Activated CD4-positive, alpha-beta memory T cell treated with anti-CD3 and anti-CD28 coated beads for 36 hours (primary cell): ENCODE measurements at regions of chr2 and their contacts with region 1.

Region 1: DNA sequence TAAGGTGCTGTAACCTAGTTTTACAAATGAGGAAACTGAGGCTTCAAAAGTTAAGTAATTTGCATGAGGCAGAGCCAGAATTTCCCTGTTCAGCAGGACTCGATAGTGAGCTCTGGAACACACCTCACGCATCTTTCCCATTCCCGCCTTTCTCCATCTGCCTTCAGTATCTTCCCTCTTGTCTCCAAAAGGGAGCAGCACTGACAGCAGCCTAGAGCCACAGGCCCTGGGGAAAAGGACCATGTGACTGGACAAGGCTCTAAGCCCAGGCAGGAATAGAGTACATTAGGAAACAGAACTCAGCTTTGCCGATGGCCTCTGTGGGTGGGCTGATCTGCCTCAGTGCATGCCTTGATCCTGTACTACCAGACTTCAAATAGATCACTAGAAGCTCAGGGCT is 21.5 kb downstream of the GPR155 start:
- DNase-seq: no peak
- H3K4me3 Mint-ChIP-seq: no peak overlapping the region
- H3K27ac Mint-ChIP-seq: no peak overlapping the region
- H3K4me1 Mint-ChIP-seq: no peaks in the 10 kb centered on the region
- H3K27me3 Mint-ChIP-seq: no peaks in the 10 kb centered on the region

Region 2: DNA sequence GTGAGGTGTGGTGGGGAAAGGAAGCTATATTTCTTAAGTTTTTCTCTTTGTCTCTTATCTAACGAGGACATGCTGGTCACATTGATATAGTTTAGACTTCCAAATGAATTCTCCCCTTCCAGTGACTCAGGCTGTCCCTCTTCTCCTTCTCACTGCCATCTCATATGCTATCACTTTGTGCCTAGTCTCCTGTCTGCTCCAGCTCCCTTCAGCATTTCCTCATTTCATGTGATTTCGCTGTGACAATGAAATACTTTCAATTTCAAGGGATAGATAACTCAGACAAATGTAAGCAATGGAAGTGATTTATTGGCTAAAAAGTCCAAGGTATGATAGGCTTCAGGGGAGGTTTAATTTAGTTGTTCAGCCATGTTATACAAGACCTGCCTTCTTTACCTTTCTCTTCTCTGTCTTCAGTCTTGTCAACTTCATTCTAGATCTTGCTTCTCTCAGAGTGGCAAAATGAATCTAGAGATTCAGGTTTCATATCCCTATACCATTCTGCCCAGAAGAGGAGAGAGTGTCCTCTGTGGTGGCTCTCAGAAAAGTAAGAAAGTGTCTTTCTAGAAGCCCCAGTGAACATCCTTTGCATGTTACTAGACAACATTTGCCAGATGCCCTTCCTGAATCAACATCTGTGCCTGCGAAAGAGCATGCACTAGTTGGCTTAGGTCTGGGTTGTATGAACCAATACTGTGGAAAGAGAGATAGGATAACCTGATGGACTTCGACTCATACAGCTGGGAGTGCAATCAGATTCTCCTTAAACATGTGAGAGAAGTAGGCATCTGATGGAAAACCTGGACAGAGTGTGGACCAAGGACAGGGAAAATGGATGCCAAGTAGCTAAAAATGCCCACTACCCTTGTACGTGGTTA is 51.4 kb after region 1 on chr2:
- CTCF ChIA-PET with region 1: interaction called, 51 read pairs
- POLR2A ChIA-PET with region 1: no interaction called
- intact Hi-C with region 1: no loop called
- DNase-seq: no peak
- H3K4me3 Mint-ChIP-seq: no peak overlapping the region
- H3K27ac Mint-ChIP-seq: no peak overlapping the region
- H3K4me1 Mint-ChIP-seq: peaks cover 16% of the 10 kb centered on the region
- H3K27me3 Mint-ChIP-seq: no peaks in the 10 kb centered on the region

Region 3: DNA sequence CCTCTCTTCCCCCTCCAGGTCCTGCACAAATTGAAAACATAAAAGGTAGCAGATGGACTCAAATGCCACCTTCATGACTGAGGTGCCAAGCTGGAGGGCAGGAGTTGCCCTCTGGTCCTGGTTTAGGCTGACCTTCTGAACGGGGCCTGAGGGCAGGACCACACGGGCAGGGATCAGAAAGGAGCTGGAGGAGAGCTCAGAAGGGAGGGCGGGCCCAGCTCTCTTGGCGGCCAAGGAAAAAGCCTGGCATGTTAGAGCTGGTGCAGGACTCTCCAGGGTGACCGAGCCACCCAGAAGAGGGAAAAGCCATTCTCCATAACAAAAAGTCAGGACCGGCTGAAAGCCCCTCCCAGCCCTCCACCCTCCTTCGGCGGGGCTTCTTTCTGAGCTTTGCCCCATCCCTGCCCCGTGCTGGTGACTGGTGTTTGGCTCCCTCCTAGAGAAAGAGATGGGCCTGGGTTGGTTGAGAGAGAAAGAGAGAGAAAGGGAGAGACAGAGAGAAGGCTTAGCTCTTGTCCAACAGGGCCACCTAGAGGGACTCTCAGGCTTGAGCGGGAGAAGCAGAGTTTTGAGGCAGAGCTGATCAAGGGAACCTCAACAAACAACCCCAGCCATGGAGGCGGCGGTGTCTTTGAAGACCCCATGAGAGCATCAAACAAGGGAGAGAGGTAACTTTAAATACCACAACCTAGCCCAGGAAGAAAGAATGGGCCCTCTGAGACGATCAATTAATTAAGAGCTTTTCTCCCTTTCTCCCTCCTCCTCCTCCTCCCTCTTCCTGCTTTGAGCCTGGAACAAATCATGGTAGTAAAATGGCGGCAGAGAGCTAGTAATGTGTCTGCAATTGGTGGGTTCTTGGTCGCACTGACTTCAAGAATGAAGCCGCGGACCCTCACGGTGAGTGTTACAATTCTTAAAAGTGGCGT is 81.5 kb after region 1 on chr2:
- CTCF ChIA-PET with region 1: interaction called, 159 read pairs
- POLR2A ChIA-PET with region 1: interaction called, 3 read pairs
- intact Hi-C with region 1: loop called (anchors 1 kb)
- DNase-seq: peak; percentile 66
- H3K4me3 Mint-ChIP-seq: no peak overlapping the region
- H3K27ac Mint-ChIP-seq: peak overlapping the region; percentile 65
- H3K4me1 Mint-ChIP-seq: peaks cover 22% of the 10 kb centered on the region
- H3K27me3 Mint-ChIP-seq: no peaks in the 10 kb centered on the region

Region 4: GRCh38 chr2:174577967-174578589 is 112.8 kb after region 1 on chr2:
- CTCF ChIA-PET with region 1: interaction called, 14 read pairs
- POLR2A ChIA-PET with region 1: interaction called, 3 read pairs
- intact Hi-C with region 1: no loop called
- DNase-seq: peak; percentile 70
- H3K4me3 Mint-ChIP-seq: no peak overlapping the region
- H3K27ac Mint-ChIP-seq: peak overlapping the region; percentile 54
- H3K4me1 Mint-ChIP-seq: peaks cover 78% of the 10 kb centered on the region
- H3K27me3 Mint-ChIP-seq: no peaks in the 10 kb centered on the region

Region 5: DNA sequence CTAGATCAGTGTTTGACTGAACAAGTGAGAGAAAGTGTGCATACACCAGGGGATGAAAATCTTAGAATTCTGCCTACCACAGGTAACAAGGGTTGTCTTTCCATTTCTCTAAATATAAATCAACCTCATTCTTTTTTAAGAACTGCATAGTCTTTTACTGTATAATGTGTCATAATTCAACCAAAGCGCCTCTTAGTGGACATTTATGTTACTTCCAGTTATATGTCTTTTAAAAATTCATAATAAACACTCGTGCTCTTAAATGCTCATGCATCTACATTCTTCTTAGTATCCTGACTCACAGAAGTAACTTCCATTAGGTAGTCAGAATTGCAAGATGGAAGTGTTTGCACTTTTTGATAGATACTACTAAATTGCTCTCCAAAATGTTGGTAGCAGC is 222.8 kb after region 1 on chr2:
- CTCF ChIA-PET with region 1: interaction called, 97 read pairs
- POLR2A ChIA-PET with region 1: no interaction called
- intact Hi-C with region 1: loop called (anchors 1 kb)
- DNase-seq: no peak
- H3K4me3 Mint-ChIP-seq: no peak overlapping the region
- H3K27ac Mint-ChIP-seq: no peak overlapping the region
- H3K4me1 Mint-ChIP-seq: peaks cover 32% of the 10 kb centered on the region
- H3K27me3 Mint-ChIP-seq: no peaks in the 10 kb centered on the region

Region 6: GRCh38 chr2:174827371-174828369 is 362.3 kb after region 1 on chr2:
- CTCF ChIA-PET with region 1: no interaction called
- POLR2A ChIA-PET with region 1: no interaction called
- intact Hi-C with region 1: no loop called
- DNase-seq: no peak
- H3K4me3 Mint-ChIP-seq: no peak overlapping the region
- H3K27ac Mint-ChIP-seq: no peak overlapping the region
- H3K4me1 Mint-ChIP-seq: peaks cover 15% of the 10 kb centered on the region
- H3K27me3 Mint-ChIP-seq: peaks cover 1% of the 10 kb centered on the region